ENCODE measurements at regions of chr1 and their contacts with region 1.

Region 1: GRCh38 chr1:244918421-244919319 is 54.3 kb upstream of the HNRNPU start:
- DNase-seq: peak; percentile 64 to 86
- ATAC-seq: peak; percentile 69 to 79
- H3K4me3 ChIP-seq: peak overlapping the region; percentile 56 to 70 (median 63)
- H3K27ac ChIP-seq: peak overlapping the region; percentile 88 to 96 (median 92)
- H3K4me1 ChIP-seq: peaks cover 32 to 37% of the 10 kb centered on the region in 2 donors
- H3K27me3 ChIP-seq: no peaks in the 10 kb centered on the region
- CTCF ChIP-seq: peak in 3 of 5 experiments; percentile 12 to 51 (median 21)
- POLR2A ChIP-seq: peak; percentile 78 to 79

Region 2: DNA sequence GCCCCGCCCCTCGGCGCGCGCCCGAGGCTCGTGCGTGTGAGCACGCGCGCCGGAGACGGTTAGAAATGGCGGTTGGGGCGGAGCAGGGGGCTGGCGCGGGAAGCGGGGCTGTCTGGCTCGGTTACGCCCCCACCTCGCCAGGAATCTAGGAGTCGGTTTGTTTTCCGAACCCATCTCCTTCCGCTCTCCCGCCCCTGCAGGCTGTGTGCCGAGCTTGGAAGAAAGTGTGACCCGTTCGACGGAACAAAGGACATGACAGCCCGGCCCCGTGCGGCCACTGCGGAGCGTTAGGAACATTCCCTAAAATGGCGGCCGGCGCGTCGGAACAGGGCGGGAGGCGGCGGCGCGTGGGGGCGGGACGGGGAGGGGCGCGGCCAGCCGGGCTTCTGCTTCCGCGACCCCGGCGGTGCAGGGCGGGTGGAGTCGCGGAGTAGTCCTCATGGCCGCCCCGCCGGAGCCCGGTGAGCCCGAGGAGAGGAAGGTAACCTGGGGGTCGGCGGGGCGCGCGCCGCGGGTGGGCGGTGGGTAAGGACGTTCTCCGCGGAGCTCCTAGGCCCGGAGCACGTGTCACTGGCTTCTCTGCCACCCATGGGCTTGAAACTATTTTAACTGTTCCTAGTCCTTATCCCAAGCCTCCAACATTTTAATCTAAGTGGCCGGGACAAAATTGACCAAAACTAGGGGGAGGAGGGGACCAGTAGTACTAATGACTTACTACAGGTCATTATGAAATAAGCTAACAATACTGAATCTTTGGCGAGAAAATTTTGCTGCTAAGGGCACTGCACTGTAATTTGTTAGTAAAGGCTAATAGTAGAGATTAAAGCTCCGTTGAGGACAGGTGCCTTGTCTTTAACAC is 83.2 kb before region 1 on chr1 and contains the start of gene COX20:
- in situ Hi-C with region 1: no loop called
- intact Hi-C with region 1: loop called (anchors 1 kb)
- DNase-seq: peak; percentile 74 to 88
- ATAC-seq: peak; percentile 70 to 80
- H3K4me3 ChIP-seq: peak within 1 kb of the TSS; percentile 68 to 81 (median 76)
- H3K27ac ChIP-seq: peak within 1 kb of the TSS; percentile 96 to 99 (median 99)
- H3K4me1 ChIP-seq: peaks cover 11 to 33% of the 10 kb centered on the region in 2 donors
- H3K27me3 ChIP-seq: no peaks in the 10 kb centered on the region
- CTCF ChIP-seq: peak in 1 of 5 experiments; percentile 14
- POLR2A ChIP-seq: peak; percentile 65 to 66
- total RNA-seq, gene COX20: 22.7 to 72.0 (median 35.4) TPM

Region 3: GRCh38 chr1:244896550-244896949 is 22.1 kb before region 1 on chr1:
- in situ Hi-C with region 1: no loop called
- intact Hi-C with region 1: loop called (anchors 1 kb)
- DNase-seq: no peak
- ATAC-seq: no peak
- H3K4me3 ChIP-seq: no peak overlapping the region
- H3K27ac ChIP-seq: no peak overlapping the region
- H3K4me1 ChIP-seq: peaks cover 12 to 13% of the 10 kb centered on the region in 2 donors
- H3K27me3 ChIP-seq: no peaks in the 10 kb centered on the region
- CTCF ChIP-seq: no peak
- POLR2A ChIP-seq: no peak

Region 4: DNA sequence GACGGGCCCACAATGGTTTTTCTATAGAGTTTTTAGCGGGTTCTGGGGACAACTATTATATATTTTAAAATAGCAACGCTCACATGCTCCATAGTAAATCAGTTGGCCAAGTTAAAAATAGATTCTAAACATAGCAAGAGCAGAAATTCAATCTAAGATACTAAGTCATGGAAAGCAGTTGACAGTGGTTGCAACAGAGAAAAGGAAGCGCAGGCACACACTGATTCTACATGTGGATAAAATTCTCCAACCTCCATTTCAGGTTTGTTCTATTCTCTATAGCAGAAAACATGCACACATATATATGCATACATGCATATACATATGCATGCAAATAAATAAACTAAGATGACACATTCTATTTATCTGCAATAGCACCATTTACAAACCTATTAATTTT is 35.2 kb after region 1 on chr1:
- in situ Hi-C with region 1: no loop called
- intact Hi-C with region 1: loop called (anchors 1 kb)
- DNase-seq: peak; percentile 22 to 60
- ATAC-seq: peak; percentile 97 to 99
- H3K4me3 ChIP-seq: peak overlapping the region in 1 of 4 donors; percentile 17
- H3K27ac ChIP-seq: peak overlapping the region; percentile 83 to 92 (median 90)
- H3K4me1 ChIP-seq: peaks cover 29 to 33% of the 10 kb centered on the region in 2 donors
- H3K27me3 ChIP-seq: no peaks in the 10 kb centered on the region
- CTCF ChIP-seq: no peak
- POLR2A ChIP-seq: peak in 1 of 2 donors; percentile 21

Region 5: DNA sequence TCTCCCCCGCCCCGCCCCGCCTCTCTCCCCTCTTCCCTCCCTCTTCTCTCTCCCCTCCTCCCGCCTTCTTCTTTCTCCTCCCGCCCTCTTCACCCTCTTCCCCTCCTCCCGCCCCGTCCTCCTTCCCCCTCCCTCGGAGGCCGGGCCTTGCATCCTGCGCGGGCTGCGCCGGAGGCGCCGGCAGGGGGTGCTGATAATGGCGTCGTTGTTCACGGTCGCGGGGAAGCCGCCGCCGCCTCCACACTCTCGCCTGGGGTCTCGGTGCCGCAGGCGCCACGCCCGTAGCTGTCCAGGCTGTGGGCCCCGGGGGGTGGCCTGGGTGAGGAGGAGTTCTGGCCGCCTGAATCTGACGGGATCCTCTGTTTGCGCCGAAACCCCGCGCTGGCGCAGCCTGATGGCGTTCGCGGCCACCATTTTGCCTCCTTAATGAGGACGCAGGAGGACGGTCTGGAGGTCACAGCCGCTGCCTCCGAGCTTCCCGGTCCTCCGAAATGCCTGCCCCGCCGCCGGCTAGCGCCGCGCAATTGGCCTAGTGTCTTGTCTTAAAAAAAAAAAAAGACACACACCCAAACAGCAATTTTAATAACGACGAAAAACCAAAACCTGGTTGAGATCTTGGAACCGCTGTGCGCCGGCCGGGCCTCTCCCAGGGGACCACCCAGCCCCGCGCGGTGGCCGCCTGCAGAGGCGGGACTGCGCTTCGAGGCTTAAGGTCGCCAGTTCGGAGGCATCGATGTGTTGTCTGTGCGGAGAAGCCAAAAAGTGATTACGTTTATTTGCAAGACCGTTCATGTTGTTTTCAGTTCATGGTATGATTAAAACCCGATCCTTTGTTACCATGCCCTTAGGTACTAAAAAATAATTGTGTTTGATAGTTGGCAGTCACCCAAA is 52.2 kb after region 1 on chr1:
- in situ Hi-C with region 1: loop called in 2 of 4 experiments (anchors 5 kb)
- intact Hi-C with region 1: loop called (anchors 1 kb)
- DNase-seq: peak; percentile 93 to 97
- ATAC-seq: peak; percentile 78 to 83
- H3K4me3 ChIP-seq: peak overlapping the region; percentile 67 to 84 (median 79)
- H3K27ac ChIP-seq: peak overlapping the region; percentile 98 to 100 (median 98)
- H3K4me1 ChIP-seq: peaks cover 20 to 22% of the 10 kb centered on the region in 2 donors
- H3K27me3 ChIP-seq: no peaks in the 10 kb centered on the region
- CTCF ChIP-seq: peak; percentile 29 to 75 (median 63)
- POLR2A ChIP-seq: peak; percentile 73 to 80